BJ (cell line): ENCODE measurements at regions of chr7 and their contacts with region 1.

Region 1: GRCh38 chr7:92228100-92228499 is 17.6 kb downstream of the KRIT1 start:
- DNase-seq: no peak
- H3K4me3 ChIP-seq: no peak overlapping the region
- H3K27me3 ChIP-seq: no peaks in the 10 kb centered on the region
- CTCF ChIP-seq: no peak

Region 2: DNA sequence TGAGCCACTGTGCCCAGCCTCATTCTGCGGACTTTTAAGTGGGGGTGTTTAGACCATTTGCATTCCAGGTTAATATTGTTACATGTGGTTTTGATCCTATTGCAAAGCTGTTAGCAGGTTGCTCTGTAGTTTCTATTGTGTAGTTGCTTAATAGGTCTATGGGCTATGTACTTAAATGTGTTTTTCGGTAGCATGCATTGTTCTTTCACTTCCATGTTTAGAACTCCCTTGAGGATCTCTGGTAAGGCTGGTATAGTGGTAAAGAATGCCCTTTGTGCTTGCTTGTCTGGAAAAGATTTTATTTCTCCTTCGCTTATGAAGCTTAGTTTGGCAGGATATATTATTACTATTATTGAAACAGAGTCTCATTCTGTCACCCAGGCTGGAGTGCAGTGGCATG is 35.8 kb before region 1 on chr7:
- CTCF ChIA-PET with region 1: no interaction called
- POLR2A ChIA-PET with region 1: interaction called, 10 read pairs
- DNase-seq: no peak
- H3K4me3 ChIP-seq: no peak overlapping the region
- H3K27me3 ChIP-seq: no peaks in the 10 kb centered on the region
- CTCF ChIP-seq: no peak